ENCODE measurements at regions of chr15 and their contacts with region 1.

Region 1: DNA sequence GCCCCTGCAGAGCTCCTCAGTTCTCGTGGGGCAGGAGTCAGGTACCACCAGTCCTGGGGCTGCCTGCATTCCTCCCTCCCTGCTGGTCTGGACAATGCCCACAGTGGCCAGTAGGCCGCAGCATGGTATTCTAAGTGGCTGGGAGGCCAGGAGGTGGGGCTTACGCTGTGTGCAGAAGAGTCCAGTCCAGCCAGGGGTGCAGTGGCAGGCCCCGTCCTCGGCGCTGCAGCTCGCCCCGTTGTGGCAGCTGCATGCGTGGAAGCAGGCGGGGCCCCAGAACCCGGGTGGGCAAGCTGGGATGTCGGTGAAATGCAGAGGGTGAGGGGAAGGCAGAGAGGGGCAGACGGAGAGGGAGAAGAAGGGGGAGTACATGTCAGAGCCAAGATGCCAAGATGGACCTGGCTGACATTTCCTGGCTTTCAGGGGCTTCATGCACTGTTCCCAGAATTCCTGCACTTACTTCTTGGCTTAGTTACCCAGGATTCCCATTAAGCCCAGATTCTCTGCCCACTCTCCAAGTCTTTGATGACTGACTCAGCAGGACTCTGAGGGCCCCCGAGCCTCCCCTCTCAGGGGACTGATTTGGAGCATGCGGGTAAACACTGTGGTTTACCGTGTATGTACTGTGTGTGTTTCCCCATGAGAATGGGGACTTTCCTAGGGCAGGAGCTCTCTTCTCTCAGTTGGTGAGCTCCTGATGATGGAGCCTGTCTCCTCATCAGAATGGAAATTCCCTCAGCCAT is 47.5 kb downstream of the RAB11A start:
- DNase-seq: peak; percentile 72
- H3K4me3 Mint-ChIP-seq: no peak overlapping the region
- H3K27ac Mint-ChIP-seq: peak overlapping the region; percentile 21
- H3K4me1 Mint-ChIP-seq: peaks cover 32% of the 10 kb centered on the region
- H3K27me3 Mint-ChIP-seq: no peaks in the 10 kb centered on the region

Region 2: DNA sequence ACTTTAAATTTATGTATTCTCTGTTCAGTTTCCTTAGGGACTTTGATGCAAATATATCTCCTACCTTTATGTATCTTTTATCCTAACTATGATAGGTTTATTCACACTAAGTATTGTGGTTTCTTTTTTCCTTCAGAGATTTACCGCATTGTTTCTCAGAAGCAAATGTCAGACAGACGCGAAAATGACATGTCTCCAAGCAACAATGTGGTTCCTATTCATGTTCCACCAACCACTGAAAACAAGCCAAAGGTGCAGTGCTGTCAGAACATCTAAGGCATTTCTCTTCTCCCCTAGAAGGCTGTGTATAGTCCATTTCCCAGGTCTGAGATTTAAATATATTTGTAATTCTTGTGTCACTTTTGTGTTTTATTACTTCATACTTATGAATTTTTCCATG is 29.3 kb before region 1 on chr15:
- CTCF ChIA-PET with region 1: no interaction called
- POLR2A ChIA-PET with region 1: no interaction called
- intact Hi-C with region 1: loop called (anchors 1 kb)
- DNase-seq: peak; percentile 58
- H3K4me3 Mint-ChIP-seq: no peak overlapping the region
- H3K27ac Mint-ChIP-seq: peak overlapping the region; percentile 66
- H3K4me1 Mint-ChIP-seq: peaks cover 78% of the 10 kb centered on the region
- H3K27me3 Mint-ChIP-seq: no peaks in the 10 kb centered on the region

Region 3: DNA sequence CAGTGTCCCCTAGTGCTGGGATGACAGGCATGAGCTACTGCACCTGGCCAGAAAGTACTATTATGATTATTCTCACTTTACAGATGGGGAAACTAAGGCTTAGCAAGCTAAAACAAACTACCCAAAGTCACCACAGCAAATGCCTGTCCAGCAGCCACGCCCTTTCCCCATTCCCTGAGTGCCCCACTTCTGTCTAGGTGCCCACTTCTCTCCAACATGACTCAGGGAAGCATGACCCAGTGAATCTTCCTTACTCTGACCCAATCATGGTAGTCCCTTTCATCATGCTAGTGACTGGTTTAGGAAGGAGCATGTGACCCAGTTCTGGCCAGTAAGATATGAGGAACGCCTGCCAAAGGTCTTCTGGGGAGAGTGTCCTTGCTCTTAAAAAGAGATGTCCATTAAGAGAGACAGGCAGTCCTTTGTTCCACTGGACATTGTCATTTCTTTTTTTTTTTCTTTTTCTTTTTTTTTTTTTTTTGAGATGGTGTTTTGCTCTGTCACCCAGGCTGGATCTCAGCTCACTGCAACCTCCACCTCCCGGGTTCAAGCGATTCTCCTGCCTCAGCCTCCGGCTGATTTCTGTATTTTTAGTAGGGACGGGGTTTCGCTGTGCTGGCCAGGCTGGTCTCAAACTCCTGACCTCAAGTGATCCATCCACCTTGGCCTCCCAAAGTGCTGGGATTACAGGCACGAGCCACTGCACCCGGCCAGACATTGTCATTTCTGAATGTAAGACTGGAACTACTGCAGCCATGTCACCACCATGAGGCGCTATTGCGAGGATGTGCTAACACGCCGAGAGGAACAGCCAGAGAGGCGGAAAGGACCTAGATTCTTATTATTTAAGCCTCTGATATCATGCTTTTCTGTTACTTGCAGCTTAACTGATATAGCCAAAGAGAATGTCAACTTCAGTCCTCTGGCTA is 316.9 kb after region 1 on chr15:
- CTCF ChIA-PET with region 1: no interaction called
- POLR2A ChIA-PET with region 1: no interaction called
- intact Hi-C with region 1: no loop called
- DNase-seq: peak; percentile 27
- H3K4me3 Mint-ChIP-seq: no peak overlapping the region
- H3K27ac Mint-ChIP-seq: no peak overlapping the region
- H3K4me1 Mint-ChIP-seq: no peaks in the 10 kb centered on the region
- H3K27me3 Mint-ChIP-seq: no peaks in the 10 kb centered on the region

Region 4: GRCh38 chr15:66714543-66714981 is 797.7 kb after region 1 on chr15:
- CTCF ChIA-PET with region 1: no interaction called
- POLR2A ChIA-PET with region 1: no interaction called
- intact Hi-C with region 1: no loop called
- DNase-seq: no peak
- H3K4me3 Mint-ChIP-seq: no peak overlapping the region
- H3K27ac Mint-ChIP-seq: no peak overlapping the region
- H3K4me1 Mint-ChIP-seq: no peaks in the 10 kb centered on the region
- H3K27me3 Mint-ChIP-seq: peaks cover 1% of the 10 kb centered on the region

Measured in activated CD4-positive, alpha-beta memory T cell treated with anti-CD3 and anti-CD28 coated beads for 36 hours (primary cell).